GM13976 (cell line): ENCODE measurements at regions of chr6 and their contacts with region 1.

Region 1: GRCh38 chr6:123316733-123317323 is 319.9 kb downstream of the TRDN start:
- DNase-seq: peak; percentile 1
- CTCF ChIP-seq: no peak

Region 2: DNA sequence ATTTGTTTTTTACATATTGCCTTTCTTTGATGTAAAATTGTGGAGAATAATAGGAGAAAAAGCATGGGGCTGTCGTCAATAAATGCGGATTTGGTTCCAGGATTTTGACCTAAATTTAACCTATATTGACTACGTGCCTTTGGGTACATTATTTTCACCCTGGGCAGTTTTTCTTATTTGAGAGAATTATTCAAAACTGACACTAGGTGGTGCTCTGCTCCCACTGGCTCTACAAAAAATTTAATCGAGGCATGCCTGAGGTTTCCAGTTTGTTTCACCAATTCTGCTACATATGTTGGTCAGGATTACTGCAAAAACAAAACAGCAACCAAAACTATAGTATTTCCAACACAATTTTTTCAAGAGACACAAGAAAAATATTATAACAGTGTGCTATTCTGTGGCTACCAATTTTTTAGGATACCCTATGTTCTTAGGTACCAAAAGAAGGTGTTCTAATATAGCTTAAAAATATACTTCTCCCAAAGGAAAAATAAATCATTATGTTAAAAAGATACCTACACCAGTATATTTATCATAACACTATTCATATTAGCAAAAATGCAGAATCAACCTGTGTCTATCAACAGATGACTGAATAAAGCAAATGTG is 585.9 kb before region 1 on chr6:
- in situ Hi-C with region 1: loop called (anchors 25 kb)
- DNase-seq: no peak
- CTCF ChIP-seq: peak; percentile 36

Region 3: DNA sequence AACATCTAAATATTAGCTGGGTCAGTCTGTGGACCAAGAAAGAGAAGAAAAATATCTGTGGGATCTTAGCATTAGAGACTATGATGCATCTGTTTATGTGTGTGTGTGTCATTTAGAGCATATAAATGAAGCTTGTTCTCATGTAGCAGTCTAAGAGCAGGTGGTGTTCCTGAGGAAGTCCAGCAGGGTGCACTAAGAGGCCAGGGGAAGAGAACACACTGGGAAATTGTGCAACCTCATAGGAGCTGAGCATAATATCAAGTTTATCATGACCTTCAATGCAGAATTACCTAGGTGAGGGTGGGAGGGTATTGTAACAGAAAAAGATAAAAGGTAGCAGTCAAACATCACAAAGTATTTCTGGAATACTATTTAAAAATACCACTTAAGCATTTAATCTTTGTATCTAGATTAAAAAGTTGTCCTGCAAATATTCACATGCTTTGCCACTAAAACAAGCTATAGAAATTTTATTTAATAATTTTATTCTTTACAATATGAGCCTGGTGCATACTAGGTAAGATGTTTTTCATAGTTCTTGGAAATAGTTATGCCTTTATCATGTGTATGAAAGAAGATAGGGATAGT is 447.3 kb before region 1 on chr6:
- in situ Hi-C with region 1: loop called (anchors 25 kb)
- DNase-seq: peak; percentile 52
- CTCF ChIP-seq: peak; percentile 51